Activated T-helper 1 cell treated with anti-CD3 and anti-CD28 coated beads, Interleukin-12 subunit alpha, Interleukin-12 subunit beta, Interleukin-2, Interleukin-4 antibody, amounts not matched to agents 30 ng/mL and 10 ng/mL and 1 ng/mL, durations not matched to agents 14 hours and 24 hours and 36 hours (primary cell): ENCODE measurements at regions of chr17 and their contacts with region 1.

Region 1: DNA sequence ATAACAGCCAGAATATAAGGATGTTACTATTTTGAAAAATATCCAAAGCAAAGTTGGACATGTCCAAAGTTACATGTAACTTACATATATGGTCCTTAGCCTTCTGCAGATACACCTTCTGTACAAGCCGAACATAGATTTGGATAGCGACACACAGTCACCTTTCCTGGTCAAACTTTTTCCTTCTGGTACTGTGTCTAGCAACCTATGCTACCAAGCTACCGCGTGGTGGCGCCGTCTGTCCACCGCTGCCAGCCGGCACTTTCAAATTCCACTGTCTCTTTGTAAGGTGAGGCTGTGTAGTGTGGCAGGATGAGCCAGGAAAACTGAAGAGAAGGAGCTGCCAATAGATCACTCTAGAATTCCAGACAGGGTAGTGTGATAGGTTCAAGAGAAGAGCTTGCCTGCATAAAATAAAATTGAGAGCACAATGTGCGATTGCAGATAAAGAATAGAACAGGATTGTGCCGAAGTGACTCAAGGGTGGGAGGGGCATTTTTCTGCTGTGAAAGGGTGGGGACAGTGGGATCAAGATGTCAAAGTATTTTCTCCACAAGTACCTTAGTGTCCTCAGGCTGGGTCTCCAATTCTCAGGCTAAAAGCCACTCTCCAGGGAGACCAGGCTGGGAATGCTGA is 366.9 kb downstream of the SLC39A11 start:
- DNase-seq: peak; percentile 32
- H3K4me3 Mint-ChIP-seq: peak overlapping the region; percentile 40
- H3K27ac Mint-ChIP-seq: peak overlapping the region; percentile 76
- H3K4me1 Mint-ChIP-seq: peaks cover 43% of the 10 kb centered on the region
- H3K27me3 Mint-ChIP-seq: peaks cover 2% of the 10 kb centered on the region

Region 2: GRCh38 chr17:72592242-72592966 is 133.1 kb before region 1 on chr17:
- intact Hi-C with region 1: loop called (anchors 10 kb)
- DNase-seq: peak; percentile 66
- H3K4me3 Mint-ChIP-seq: peak overlapping the region; percentile 88
- H3K27ac Mint-ChIP-seq: peak overlapping the region; percentile 24
- H3K4me1 Mint-ChIP-seq: peaks cover 37% of the 10 kb centered on the region
- H3K27me3 Mint-ChIP-seq: peaks cover 50% of the 10 kb centered on the region

Region 3: DNA sequence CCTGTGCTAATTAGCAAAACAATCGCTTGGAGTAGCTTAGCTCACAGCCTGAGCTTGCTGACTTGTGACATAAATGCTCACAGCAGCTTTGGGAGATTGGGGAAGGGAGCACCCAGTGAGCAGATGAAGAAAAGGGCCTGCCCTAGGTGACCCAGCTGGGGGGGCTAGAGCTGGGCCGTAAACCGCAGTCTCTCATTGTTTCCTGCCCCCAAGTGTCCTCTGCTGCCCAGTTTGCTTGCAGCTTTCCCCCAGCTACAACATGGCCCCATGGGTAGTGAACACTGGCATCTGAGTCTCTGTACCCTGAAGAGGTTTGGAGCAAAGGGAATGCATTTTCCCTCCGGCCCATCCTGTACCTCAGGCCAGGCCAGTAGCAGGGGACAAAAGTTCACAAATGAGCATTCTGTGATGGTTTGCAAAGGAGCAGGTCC is 17.5 kb after region 1 on chr17:
- intact Hi-C with region 1: no loop called
- DNase-seq: no peak
- H3K4me3 Mint-ChIP-seq: no peak overlapping the region
- H3K27ac Mint-ChIP-seq: no peak overlapping the region
- H3K4me1 Mint-ChIP-seq: no peaks in the 10 kb centered on the region
- H3K27me3 Mint-ChIP-seq: no peaks in the 10 kb centered on the region

Region 4: DNA sequence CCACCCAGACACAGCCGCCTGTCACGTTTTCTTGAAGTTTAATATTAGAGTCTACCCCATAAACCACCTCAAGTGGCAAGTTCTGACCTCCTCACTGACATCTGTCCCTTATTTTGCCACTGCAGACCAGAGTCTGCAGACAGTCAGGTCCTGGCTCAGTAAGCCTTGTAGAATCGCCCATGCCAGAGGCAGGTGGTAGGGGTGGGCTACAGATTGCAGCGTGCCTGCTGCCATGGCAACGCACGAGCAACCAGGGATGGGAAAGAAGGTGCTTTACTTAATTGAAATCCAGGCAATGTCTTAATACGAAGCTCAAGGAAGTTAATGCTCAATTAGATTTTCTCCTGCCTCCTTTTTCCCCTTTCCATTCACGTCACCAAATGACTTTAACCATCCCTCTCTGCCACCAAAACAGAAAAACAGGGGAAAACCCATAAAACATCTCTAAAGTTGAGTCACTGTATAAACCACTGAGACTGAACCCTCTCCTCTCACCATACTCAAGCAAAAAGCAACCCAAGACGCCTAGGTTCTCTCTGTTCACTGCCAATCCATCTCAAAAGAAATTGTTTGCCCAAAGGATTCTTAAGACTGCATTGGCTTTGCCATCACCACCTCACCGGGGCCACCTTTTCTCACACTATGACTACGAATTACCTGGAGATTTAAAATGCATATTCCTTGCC is 138.1 kb after region 1 on chr17:
- intact Hi-C with region 1: loop called (anchors 2 kb)
- DNase-seq: no peak
- H3K4me3 Mint-ChIP-seq: no peak overlapping the region
- H3K27ac Mint-ChIP-seq: peak overlapping the region; percentile 69
- H3K4me1 Mint-ChIP-seq: peaks cover 46% of the 10 kb centered on the region
- H3K27me3 Mint-ChIP-seq: no peaks in the 10 kb centered on the region

Region 5: GRCh38 chr17:73092523-73093135 is 367.1 kb after region 1 on chr17 and contains the start of gene SLC39A11:
- intact Hi-C with region 1: loop called (anchors 1 kb)
- DNase-seq: peak; percentile 89
- H3K4me3 Mint-ChIP-seq: peak within 1 kb of the TSS; percentile 100
- H3K27ac Mint-ChIP-seq: peak within 1 kb of the TSS; percentile 98
- H3K4me1 Mint-ChIP-seq: peaks cover 22% of the 10 kb centered on the region
- H3K27me3 Mint-ChIP-seq: peaks cover 6% of the 10 kb centered on the region
- total RNA-seq, gene SLC39A11: 20.9 and 25.7 TPM in 2 replicates

Region 6: DNA sequence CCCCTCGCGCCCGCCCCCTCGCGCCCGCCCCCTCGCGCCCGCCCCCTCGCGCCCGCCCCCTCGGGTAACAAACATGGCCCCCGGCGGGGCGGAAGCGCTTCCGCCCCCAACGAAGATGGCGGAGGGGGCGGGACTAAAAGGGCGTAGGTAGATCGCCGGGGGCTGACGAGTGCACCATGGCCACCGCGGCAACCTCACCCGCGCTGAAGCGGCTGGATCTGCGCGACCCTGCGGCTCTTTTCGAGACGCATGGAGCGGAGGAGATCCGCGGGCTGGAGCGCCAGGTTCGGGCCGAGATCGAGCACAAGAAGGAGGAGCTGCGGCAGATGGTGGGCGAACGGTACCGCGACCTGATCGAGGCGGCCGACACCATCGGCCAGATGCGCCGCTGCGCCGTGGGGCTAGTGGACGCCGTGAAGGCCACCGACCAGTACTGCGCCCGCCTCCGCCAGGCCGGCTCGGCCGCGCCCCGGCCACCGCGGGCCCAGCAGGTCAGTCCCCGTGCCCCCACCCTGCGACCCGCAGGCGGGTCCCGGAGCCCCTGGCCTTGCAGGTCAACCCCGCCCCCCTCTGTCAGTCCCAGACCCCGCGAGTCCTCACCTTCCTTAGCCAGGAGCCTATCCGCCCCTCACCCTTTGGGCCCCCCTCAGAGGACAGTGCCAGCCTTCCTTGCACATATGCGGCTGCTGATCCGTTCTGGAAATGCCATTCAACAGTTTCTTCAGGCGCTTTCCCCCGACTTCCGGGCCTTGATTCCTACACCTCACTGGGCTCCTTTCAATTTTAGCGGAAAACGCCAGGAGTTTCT is 467.5 kb after region 1 on chr17 and contains the start of gene COG1:
- intact Hi-C with region 1: loop called (anchors 1 kb)
- DNase-seq: peak; percentile 55
- H3K4me3 Mint-ChIP-seq: peak within 1 kb of the TSS; percentile 96
- H3K27ac Mint-ChIP-seq: peak within 1 kb of the TSS; percentile 96
- H3K4me1 Mint-ChIP-seq: peaks cover 19% of the 10 kb centered on the region
- H3K27me3 Mint-ChIP-seq: no peaks in the 10 kb centered on the region
- total RNA-seq, gene COG1: 34.3 and 37.1 TPM in 2 replicates

Region 7: DNA sequence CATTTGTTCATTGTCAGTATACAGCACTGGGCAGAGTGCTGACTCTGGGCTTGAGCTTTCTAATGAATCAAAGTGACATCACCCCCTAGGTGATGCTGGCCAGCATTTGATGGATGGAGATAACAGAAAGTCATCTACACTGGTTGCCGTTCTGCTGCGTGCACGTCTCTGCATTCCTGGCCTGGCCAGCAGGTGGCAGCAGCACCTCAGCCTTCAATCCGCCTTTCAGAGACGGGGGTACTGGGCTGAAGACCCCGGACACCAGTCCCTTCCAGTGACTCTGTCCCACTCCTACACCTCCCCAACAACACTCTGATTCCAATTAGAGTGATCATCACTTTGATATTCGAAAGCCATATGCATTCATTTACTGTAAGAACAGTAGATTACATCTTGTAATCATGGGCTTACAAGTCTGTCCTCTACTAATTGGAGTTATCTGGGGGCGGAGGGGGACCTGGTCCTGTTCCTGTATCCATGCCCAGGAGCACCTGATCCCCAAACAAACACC is 530.2 kb after region 1 on chr17:
- intact Hi-C with region 1: loop called (anchors 1 kb)
- DNase-seq: peak; percentile 22
- H3K4me3 Mint-ChIP-seq: no peak overlapping the region
- H3K27ac Mint-ChIP-seq: no peak overlapping the region
- H3K4me1 Mint-ChIP-seq: no peaks in the 10 kb centered on the region
- H3K27me3 Mint-ChIP-seq: no peaks in the 10 kb centered on the region

Region 8: GRCh38 chr17:73371285-73371684 is 645.7 kb after region 1 on chr17:
- intact Hi-C with region 1: loop called (anchors 1 kb)
- DNase-seq: no peak
- H3K4me3 Mint-ChIP-seq: no peak overlapping the region
- H3K27ac Mint-ChIP-seq: no peak overlapping the region
- H3K4me1 Mint-ChIP-seq: no peaks in the 10 kb centered on the region
- H3K27me3 Mint-ChIP-seq: peaks cover 10% of the 10 kb centered on the region